Endothelial cell of umbilical vein (primary cell): ENCODE measurements at regions of chr9 and their contacts with region 1.

Region 1: GRCh38 chr9:129737479-129738274 is 15.2 kb downstream of the PTGES start:
- DNase-seq: peak; percentile 59
- H3K4me3 ChIP-seq: peak overlapping the region; percentile 27 to 45 (median 44)
- H3K27ac ChIP-seq: no peak overlapping the region
- H3K4me1 ChIP-seq: peaks cover 5% of the 10 kb centered on the region
- H3K27me3 ChIP-seq: no peaks in the 10 kb centered on the region
- CTCF ChIP-seq: peak; percentile 91
- POLR2A ChIP-seq: no peak

Region 2: DNA sequence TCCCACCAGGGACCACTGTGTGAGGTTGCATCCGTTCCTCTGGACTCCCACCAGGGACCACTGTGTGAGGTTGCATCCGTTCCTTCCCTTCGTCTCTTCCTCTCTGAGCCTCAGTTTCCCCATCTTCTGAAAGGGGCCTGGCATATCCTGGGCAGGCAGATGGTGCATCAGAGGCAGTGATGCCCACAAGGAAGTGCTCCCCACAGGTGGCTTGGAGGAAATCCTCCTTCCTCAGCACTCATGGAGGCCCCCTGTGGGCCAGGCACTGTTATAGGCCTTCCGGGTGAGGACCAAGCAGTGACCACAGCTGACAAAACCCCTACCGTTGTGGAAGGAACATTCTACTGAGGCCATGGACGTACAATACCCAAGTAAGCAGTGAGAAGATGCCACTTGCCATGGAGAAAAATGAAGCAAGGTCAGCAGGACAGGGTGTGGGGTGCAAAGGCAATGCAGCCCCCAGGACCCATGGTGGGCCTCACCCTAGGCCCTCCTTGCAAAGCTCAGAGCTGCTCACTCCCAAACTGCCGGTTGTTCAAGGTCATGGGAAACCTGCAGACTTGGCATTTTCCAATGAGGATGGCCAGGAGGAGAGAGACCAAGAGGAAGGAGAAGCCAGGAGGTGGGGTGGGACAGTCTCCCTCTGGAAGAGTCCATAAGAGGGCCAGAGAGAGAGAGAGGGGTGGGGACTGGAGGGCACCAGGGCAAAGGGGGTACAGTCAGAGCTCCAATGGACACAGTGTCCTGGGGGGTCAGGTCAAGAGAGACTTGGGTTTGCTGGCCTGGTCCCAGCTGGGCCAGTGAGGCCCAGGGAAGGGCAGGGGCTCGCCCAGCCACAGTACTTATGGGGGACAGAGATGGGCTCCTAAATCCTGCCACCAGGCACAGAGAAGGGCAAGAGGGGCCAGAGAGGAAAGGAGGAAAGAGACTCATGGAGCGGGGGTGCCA is 167.9 kb before region 1 on chr9:
- CTCF ChIA-PET with region 1: no interaction called
- POLR2A ChIA-PET with region 1: no interaction called
- dilution Hi-C with region 1: no loop called
- intact Hi-C with region 1: no loop called
- DNase-seq: peak; percentile 30
- H3K4me3 ChIP-seq: no peak overlapping the region
- H3K27ac ChIP-seq: no peak overlapping the region
- H3K4me1 ChIP-seq: peaks cover 2% of the 10 kb centered on the region
- H3K27me3 ChIP-seq: no peaks in the 10 kb centered on the region
- CTCF ChIP-seq: peak; percentile 22 to 48
- POLR2A ChIP-seq: no peak

Region 3: GRCh38 chr9:129641746-129642513 is 95.7 kb before region 1 on chr9 and contains the start of gene ASB6:
- CTCF ChIA-PET with region 1: interaction called, 10 read pairs
- POLR2A ChIA-PET with region 1: no interaction called
- dilution Hi-C with region 1: no loop called
- intact Hi-C with region 1: loop called (anchors 1 kb)
- DNase-seq: peak; percentile 98
- H3K4me3 ChIP-seq: peak within 1 kb of the TSS; percentile 77 to 97 (median 83)
- H3K27ac ChIP-seq: peak within 1 kb of the TSS; percentile 48
- H3K4me1 ChIP-seq: peaks cover 10% of the 10 kb centered on the region
- H3K27me3 ChIP-seq: no peaks in the 10 kb centered on the region
- CTCF ChIP-seq: peak; percentile 92 to 99
- POLR2A ChIP-seq: peak; percentile 68
- total RNA-seq, gene ASB6: 22.9 and 23.8 TPM in 2 replicates

Region 4: GRCh38 chr9:129752915-129753729 is 15.4 kb after region 1 on chr9 and contains the start of gene PTGES:
- CTCF ChIA-PET with region 1: interaction called, 28 read pairs
- POLR2A ChIA-PET with region 1: interaction called, 4 read pairs
- dilution Hi-C with region 1: no loop called
- intact Hi-C with region 1: no loop called
- DNase-seq: peak; percentile 47
- H3K4me3 ChIP-seq: no peak within 1 kb of the TSS
- H3K27ac ChIP-seq: no peak within 1 kb of the TSS
- H3K4me1 ChIP-seq: no peaks in the 10 kb centered on the region
- H3K27me3 ChIP-seq: peaks cover 2 to 6% of the 10 kb centered on the region in 2 experiments
- CTCF ChIP-seq: no peak
- POLR2A ChIP-seq: no peak
- total RNA-seq, gene PTGES: not detected in 2 replicates

Region 5: GRCh38 chr9:129776938-129777768 is 39.5 kb after region 1 on chr9:
- CTCF ChIA-PET with region 1: interaction called, 127 read pairs
- POLR2A ChIA-PET with region 1: no interaction called
- dilution Hi-C with region 1: no loop called
- intact Hi-C with region 1: no loop called
- DNase-seq: peak; percentile 78
- H3K4me3 ChIP-seq: no peak overlapping the region
- H3K27ac ChIP-seq: no peak overlapping the region
- H3K4me1 ChIP-seq: peaks cover 4% of the 10 kb centered on the region
- H3K27me3 ChIP-seq: peaks cover 0 to 2% of the 10 kb centered on the region in 2 experiments
- CTCF ChIP-seq: no peak
- POLR2A ChIP-seq: no peak